Tibial artery (tissue), 4 donors: ENCODE measurements at regions of chr19 and their contacts with region 1.

Region 1: DNA sequence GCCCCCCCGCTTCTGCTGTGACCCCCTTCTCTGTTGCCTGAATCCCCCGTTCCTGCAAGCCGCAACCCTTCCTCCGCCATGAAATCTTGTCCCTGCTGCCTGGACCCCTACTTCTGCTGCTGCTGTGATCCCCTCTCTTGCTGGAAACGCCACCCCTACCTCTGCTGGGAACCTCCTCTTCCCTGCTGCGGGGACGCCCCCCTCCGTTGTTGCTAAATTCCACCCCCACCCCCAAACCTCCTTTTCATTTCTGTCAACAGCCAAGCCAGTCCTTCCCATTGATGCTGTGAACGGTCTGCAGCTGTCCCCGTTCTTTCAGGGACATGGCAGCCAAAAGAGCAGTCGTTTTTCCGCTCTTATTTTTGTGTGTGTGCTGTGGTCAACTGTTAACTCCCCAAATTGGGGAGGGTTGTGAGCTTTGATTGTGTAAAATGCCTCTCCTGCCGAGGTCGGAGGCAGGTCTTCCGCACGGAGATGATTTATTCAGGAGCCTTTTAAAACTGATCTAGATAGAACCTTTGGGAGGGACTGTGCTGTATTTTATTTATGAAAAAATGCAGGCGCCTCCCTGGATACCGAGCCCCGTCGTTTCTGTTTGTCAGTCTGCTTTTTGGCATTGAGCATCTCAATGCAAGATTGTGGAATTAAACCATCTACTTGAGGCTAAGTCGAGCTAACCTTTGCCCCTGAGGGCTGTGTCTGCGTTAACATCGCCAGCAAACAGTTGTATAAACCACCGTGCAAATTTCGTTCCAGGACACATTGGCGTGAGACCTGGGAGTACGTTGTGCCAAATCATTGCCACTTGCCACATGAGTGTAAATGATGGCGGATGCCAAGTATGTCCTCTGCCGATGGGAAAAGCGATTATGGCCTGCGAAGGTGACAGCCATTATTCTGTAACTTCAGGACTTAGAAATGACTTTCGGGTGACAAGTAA is 27.9 kb upstream of the NDUFS7 start:
- DNase-seq: no peak
- H3K4me3 ChIP-seq: peak overlapping the region; percentile 79 to 97
- H3K27ac ChIP-seq: peak overlapping the region; percentile 94 to 96
- H3K4me1 ChIP-seq: peaks cover 0 to 35% (median 30%) of the 10 kb centered on the region in 4 donors
- H3K27me3 ChIP-seq: no peaks in the 10 kb centered on the region
- CTCF ChIP-seq: no peak

Region 2: DNA sequence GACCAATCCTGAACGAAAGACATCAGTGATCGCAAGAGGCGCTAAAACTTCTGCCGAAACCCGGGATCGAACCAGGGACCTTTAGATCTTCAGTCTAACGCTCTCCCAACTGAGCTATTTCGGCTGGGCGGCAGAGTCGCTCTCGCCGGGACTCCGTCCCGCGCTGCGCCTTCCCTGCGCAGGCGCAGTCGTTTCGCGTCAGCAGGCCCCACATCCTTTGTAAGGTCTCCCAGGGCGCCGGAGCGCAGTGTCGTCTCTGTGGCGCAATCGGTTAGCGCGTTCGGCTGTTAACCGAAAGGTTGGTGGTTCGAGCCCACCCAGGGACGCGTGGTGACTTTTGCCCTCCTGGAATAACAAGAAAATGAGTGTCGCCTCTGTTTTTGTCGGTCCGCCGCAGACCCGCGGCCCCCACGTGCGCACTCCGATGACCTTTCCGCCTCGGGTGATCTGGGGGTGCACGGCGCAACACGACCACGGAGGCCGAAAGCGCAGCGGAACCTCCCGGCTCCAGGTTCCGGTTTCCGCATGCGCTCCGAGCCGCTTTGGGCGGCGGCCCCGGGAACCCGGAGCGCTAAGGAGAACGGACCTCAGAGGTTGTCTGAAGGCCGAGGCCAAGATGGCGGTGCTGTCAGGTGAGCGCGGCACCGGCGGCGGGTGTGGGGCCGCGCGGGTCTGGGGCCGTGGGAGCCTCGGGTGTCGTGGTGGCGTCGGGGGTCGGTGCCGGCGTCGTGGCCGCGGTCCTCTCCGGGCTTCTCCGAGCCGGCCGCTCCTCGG is 27.7 kb after region 1 on chr19 and contains the start of gene NDUFS7:
- intact Hi-C with region 1: no loop called
- DNase-seq: peak; percentile 87 to 93
- H3K4me3 ChIP-seq: peak within 1 kb of the TSS; percentile 89 to 92
- H3K27ac ChIP-seq: peak within 1 kb of the TSS; percentile 84 to 90
- H3K4me1 ChIP-seq: peaks cover 0 to 28% (median 21%) of the 10 kb centered on the region in 4 donors
- H3K27me3 ChIP-seq: no peaks in the 10 kb centered on the region
- CTCF ChIP-seq: peak; percentile 7 to 67

Region 3: DNA sequence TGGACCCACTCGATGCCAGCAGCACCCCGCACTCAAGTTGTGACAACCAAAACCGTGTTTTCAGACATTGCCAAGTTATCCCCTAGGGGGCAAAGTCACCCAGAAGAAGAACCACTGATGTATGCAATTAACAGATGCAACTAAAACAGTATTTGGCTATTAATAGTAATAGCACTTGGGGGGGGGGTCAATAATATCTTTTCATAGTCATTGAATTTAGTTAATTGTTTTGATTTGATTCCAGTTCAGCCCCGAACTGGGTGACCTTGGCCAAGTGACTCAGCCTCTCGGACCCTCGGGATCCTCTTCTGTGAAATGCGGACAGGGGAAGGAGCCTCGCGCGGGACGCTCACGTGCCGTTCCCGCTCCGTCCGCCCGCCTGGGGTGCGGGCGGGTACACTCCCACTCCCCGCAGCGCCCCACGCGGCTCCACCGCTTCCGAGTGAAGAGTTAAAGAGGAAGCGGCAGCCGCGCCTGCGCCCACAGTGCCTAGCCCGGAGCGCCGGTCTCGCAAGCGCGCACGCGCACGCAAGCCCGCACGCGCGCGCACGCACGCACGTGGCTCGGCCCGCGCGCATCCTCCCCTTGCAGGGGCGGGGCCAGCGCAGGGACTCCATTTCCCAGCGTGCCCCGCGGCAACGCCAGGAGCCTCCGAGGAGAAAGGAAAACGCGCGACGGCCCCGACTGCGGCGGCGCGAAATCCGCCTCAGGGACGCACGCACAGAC is 51.1 kb after region 1 on chr19:
- intact Hi-C with region 1: loop called (anchors 10 kb)
- DNase-seq: peak; percentile 98 to 99
- H3K4me3 ChIP-seq: peak overlapping the region; percentile 89 to 97
- H3K27ac ChIP-seq: peak overlapping the region; percentile 65 to 68
- H3K4me1 ChIP-seq: peaks cover 0 to 55% (median 47%) of the 10 kb centered on the region in 4 donors
- H3K27me3 ChIP-seq: no peaks in the 10 kb centered on the region
- CTCF ChIP-seq: no peak